WTC11 (cell line): ENCODE measurements at regions of chr15 and their contacts with region 1.

Region 1: GRCh38 chr15:82849556-82850512 is 40.4 kb downstream of the WHAMM start:
- DNase-seq: peak; percentile 87
- ATAC-seq: peak; percentile 95
- H3K4me3 Mint-ChIP-seq: no peak overlapping the region; the same call in 1 of the 2 replicates
- H3K27ac Mint-ChIP-seq: peak overlapping the region; percentile 94
- H3K4me1 Mint-ChIP-seq: peaks cover 15% of the 10 kb centered on the region
- H3K27me3 Mint-ChIP-seq: no peaks in the 10 kb centered on the region
- CTCF ChIP-seq: peak; percentile 72

Region 2: DNA sequence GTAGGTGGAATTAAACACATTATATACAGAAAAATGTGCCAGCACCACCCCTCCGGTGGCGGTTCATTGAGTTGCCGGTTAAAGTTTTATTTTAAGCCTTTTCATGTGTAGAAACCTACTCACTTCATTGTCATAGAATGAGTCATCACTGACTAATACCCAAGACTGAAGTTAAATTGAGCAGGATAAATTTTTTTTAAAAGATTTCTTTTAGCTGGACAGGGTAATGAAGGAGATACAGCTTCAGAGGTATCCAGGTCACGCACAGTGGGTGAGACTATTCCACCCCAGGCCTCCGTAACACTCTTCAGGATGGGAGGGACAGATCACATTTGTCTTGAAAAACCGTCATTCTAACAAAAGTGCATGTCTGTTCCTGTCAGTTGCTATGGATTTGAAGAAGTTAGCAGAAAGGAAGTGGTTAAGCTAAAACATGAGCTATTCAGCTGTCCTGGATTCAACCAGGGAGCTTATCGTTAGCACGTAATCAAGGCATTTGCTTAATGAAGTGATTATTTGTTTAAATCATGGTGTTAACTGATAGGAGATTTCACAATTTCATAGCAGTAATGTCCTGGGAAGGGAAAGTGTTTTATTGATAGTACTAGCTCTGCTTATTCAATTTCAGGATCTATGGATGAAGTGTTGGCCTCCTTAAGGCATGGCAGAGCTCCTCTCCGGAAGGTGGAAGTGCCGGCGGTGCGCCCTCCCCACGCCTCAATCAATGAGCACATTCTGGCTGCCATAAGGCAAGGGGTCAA is 17.1 kb before region 1 on chr15:
- CTCF ChIA-PET with region 1: interaction called, 13 read pairs
- POLR2A ChIA-PET with region 1: no interaction called
- DNase-seq: no peak
- ATAC-seq: no peak
- H3K4me3 Mint-ChIP-seq: no peak overlapping the region
- H3K27ac Mint-ChIP-seq: no peak overlapping the region
- H3K4me1 Mint-ChIP-seq: no peaks in the 10 kb centered on the region
- H3K27me3 Mint-ChIP-seq: no peaks in the 10 kb centered on the region
- CTCF ChIP-seq: no peak

Region 3: DNA sequence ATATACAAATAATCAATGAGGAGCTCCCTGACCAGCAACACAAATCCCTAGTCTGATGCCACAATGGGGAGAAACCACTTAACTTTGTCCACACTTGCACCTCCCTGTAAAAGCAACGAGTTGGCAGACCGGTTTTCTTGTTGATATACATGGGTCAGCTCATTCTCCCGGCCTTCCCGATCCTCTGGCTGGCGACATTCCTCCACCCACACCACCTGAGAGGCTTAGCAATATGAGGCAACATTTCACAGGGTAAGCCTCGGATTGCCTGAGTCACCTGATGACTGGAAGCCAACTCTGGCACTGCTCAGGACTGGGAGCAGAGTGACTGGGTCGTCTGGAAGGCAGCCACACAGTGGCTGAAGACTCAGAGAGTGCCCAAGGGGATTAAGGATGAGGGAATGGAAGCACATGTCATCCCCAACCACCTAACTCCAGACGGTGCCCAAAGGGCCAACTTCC is 92.8 kb after region 1 on chr15:
- CTCF ChIA-PET with region 1: interaction called, 11 read pairs
- POLR2A ChIA-PET with region 1: no interaction called
- DNase-seq: no peak
- ATAC-seq: no peak
- H3K4me3 Mint-ChIP-seq: no peak overlapping the region
- H3K27ac Mint-ChIP-seq: no peak overlapping the region
- H3K4me1 Mint-ChIP-seq: 0 out of 2 replicates have a peak, but pooled peaks cover 3% of the 10 kb centered on the region
- H3K27me3 Mint-ChIP-seq: no peaks in the 10 kb centered on the region
- CTCF ChIP-seq: no peak

Region 4: GRCh38 chr15:82985688-82986441 is 136.0 kb after region 1 on chr15 and contains the start of gene RAMAC:
- CTCF ChIA-PET with region 1: interaction called, 10 read pairs
- POLR2A ChIA-PET with region 1: no interaction called
- DNase-seq: peak; percentile 80
- ATAC-seq: peak; percentile 94
- H3K4me3 Mint-ChIP-seq: peak within 1 kb of the TSS; percentile 94
- H3K27ac Mint-ChIP-seq: peak within 1 kb of the TSS; percentile 86
- H3K4me1 Mint-ChIP-seq: peaks cover 15% of the 10 kb centered on the region
- H3K27me3 Mint-ChIP-seq: peaks cover 21% of the 10 kb centered on the region
- CTCF ChIP-seq: no peak
- total RNA-seq, gene RAMAC: 26.6 to 28.1 TPM (median 27.1 TPM) in 3 replicates

Region 5: GRCh38 chr15:83011271-83012075 is 161.6 kb after region 1 on chr15 and contains the start of gene C15orf40:
- CTCF ChIA-PET with region 1: interaction called, 19 read pairs
- POLR2A ChIA-PET with region 1: no interaction called
- DNase-seq: peak; percentile 89
- ATAC-seq: peak; percentile 91
- H3K4me3 Mint-ChIP-seq: peak within 1 kb of the TSS; percentile 98
- H3K27ac Mint-ChIP-seq: peak within 1 kb of the TSS; percentile 89
- H3K4me1 Mint-ChIP-seq: peaks cover 34% of the 10 kb centered on the region
- H3K27me3 Mint-ChIP-seq: no peaks in the 10 kb centered on the region; the same call in 1 of the 2 replicates
- CTCF ChIP-seq: no peak; the same call in 1 of the 2 replicates
- total RNA-seq, gene C15orf40: 21.0 to 29.0 TPM (median 27.5 TPM) in 3 replicates